Activated CD8-positive, alpha-beta memory T cell treated with anti-CD3 and anti-CD28 coated beads, Interleukin-2, amount 10 ng/mL, durations not matched to agents 7 days and 5 days (primary cell): ENCODE measurements at regions of chr18 and their contacts with region 1.

Region 1: GRCh38 chr18:49041435-49042245 is 90.9 kb upstream of the SMAD7 start:
- DNase-seq: peak; percentile 56
- ATAC-seq: no peak
- H3K4me3 Mint-ChIP-seq: no peak overlapping the region
- H3K27ac Mint-ChIP-seq: no peak overlapping the region
- H3K4me1 Mint-ChIP-seq: peaks cover 3% of the 10 kb centered on the region
- H3K27me3 Mint-ChIP-seq: no peaks in the 10 kb centered on the region

Region 2: DNA sequence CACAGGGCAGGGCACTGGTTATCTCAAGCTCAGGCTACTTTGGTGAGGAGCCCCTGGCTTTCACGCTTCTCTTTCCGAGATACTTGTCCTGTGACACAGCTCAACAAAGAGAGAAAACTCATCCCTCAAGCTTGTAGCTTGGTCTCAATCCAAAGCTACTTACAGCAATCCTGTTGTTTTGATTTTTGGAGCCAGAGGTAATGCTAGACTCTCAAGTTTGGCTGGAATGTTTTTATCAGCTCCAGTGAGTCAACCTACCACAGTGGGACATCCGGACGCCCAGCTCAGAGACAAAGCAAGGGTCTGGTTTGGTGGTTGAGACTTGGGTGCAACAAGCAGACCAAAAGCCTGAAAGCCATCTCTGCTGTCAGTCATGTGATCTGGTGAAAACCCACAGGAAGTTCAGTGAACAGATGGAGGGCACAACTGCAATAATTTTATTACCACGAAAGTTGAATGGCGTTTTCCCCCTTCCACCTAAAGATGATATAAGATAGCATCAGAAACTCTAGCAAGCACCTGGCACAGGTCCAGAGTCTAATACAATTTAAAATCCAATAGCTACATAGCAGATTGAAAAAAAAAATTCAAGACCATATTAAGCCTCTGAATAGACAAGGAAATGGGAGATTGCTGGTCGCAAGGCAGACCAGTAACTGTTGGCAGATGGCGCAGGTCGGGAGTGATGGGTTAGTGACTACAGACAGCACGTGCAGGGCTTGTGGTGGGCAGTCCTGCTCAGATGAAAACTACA is 11.4 kb after region 1 on chr18:
- CTCF ChIA-PET with region 1: interaction called, 21 read pairs
- DNase-seq: peak; percentile 83
- ATAC-seq: peak; percentile 72
- H3K4me3 Mint-ChIP-seq: no peak overlapping the region
- H3K27ac Mint-ChIP-seq: peak overlapping the region; percentile 63
- H3K4me1 Mint-ChIP-seq: peaks cover 46% of the 10 kb centered on the region
- H3K27me3 Mint-ChIP-seq: no peaks in the 10 kb centered on the region